ENCODE measurements at regions of chr3 and their contacts with region 1.

Region 1: GRCh38 chr3:128736601-128737000 is 10.6 kb downstream of the RAB7A start:
- DNase-seq: no peak

Region 2: GRCh38 chr3:128532012-128532983 is 204.3 kb before region 1 on chr3:
- intact Hi-C with region 1: no loop called
- DNase-seq: no peak

Region 3: GRCh38 chr3:128787256-128788240 is 50.9 kb after region 1 on chr3:
- intact Hi-C with region 1: loop called in 1 of 2 experiments (anchors 10 kb)
- DNase-seq: no peak

Region 4: GRCh38 chr3:128864351-128864811 is 127.8 kb after region 1 on chr3:
- intact Hi-C with region 1: no loop called
- DNase-seq: no peak